ENCODE measurements at regions of chr1 and their contacts with region 1.

Region 1: GRCh38 chr1:60978421-60979357 is 103.7 kb upstream of the NFIA start:
- ATAC-seq: peak in 5 of 8 experiments; percentile 50 to 92 (median 87)
- H3K4me3 ChIP-seq: no peak overlapping the region
- H3K27ac ChIP-seq: no peak overlapping the region
- H3K4me1 ChIP-seq: peaks cover 6 to 24% of the 10 kb centered on the region in 2 donors

Region 2: GRCh38 chr1:60035921-60036320 is 942.8 kb before region 1 on chr1:
- in situ Hi-C with region 1: no loop called
- ATAC-seq: peak in 1 of 8 experiments; percentile 14
- H3K4me3 ChIP-seq: no peak overlapping the region
- H3K27ac ChIP-seq: no peak overlapping the region
- H3K4me1 ChIP-seq: no peaks in the 10 kb centered on the region

Region 3: GRCh38 chr1:61043010-61043820 is 64.5 kb after region 1 on chr1:
- in situ Hi-C with region 1: loop called in 1 of 9 experiments (anchors 5 kb)
- ATAC-seq: peak; percentile 78 to 100 (median 92)
- H3K4me3 ChIP-seq: peak overlapping the region in 3 of 5 donors; percentile 1 to 17 (median 4)
- H3K27ac ChIP-seq: no peak overlapping the region
- H3K4me1 ChIP-seq: peaks cover 0 to 3% of the 10 kb centered on the region in 2 donors

Region 4: GRCh38 chr1:61318319-61319125 is 339.8 kb after region 1 on chr1:
- in situ Hi-C with region 1: no loop called
- ATAC-seq: peak; percentile 57 to 95 (median 70)
- H3K4me3 ChIP-seq: no peak overlapping the region
- H3K27ac ChIP-seq: no peak overlapping the region
- H3K4me1 ChIP-seq: peaks cover 55 to 66% of the 10 kb centered on the region in 2 donors

Measured in motor neuron (in vitro differentiated cells).